ENCODE measurements at regions of chr3 and their contacts with region 1.

Region 1: DNA sequence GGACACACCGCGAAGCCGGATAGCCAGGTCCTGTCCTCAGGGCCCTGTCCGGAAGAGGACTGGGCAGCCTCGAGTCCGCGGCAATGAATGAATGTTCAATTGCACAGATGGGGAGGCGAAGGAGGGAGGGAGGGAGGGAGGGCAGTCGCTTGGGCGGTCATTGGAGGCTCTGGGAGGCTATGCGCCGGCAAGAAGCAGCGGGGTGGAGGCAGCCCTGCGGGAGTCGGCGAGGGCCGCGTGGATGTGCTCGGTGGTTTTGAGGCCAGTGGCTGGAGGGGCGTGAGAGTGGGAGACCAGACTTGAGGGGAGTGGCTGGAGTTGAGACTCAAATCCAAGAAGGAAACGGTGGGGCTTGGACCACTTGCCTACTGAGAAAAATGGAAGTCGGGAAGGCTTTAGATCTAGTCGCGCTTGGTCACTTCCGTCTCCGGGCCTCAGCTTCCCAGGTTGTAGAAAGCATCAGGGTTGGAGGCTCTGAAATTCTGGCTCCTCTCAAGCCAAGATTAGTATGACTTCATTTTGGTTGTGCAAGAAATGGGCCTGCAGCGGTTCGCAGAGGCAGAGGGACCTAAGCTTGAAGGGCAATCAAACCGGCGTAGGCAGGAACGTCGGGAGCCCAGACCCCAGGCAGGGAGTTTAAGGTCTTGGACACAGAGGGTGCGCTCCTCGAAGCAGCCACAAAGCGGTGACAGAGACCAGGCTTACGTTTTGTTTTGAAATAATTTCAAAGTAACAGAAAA is 21.1 kb upstream of the PLXND1 start:
- DNase-seq: peak; percentile 22
- H3K4me3 Mint-ChIP-seq: peak overlapping the region; percentile 82
- H3K27ac Mint-ChIP-seq: peak overlapping the region; percentile 76
- H3K4me1 Mint-ChIP-seq: peaks cover 20% of the 10 kb centered on the region
- H3K27me3 Mint-ChIP-seq: peaks cover 16% of the 10 kb centered on the region

Region 2: DNA sequence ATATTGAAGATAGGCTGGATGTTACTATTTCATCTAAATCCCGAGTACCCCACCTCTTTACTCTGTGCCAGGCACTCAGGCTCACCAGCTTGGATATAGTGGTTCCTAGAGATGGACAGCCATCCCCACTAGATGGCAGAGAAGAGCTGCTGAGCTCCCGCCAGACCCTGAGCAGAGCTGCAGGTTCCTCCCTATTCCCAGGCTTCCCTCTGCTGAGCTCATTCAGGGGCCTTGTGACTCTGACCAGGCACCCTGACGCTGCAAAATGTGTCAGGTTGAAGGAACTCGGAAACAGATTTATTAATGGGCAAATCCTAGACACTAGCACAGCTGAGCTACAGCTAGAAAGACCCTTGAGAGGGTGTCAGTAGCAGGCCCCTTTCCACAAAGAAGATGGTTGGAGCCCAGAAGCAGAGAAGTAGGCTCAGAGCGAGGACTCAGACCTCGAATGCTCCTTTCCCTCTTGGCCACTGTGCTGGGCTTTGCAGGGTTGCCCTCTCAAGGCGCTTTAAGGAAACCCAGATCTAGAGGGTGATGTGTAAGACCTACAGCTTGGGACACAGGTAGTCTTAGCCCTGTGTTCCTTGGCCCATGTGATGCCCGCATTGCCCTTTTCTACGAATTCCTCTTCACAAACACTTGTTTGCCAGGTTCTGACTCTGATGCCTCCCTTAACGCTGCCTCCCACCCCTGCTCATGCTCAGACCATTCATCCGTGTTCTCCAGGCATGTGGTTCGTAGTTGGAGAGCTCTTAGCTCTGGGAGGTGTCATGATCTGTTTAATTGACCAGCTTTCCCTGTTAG is 137.2 kb before region 1 on chr3:
- intact Hi-C with region 1: loop called (anchors 1 kb)
- DNase-seq: peak; percentile 19
- H3K4me3 Mint-ChIP-seq: no peak overlapping the region
- H3K27ac Mint-ChIP-seq: no peak overlapping the region
- H3K4me1 Mint-ChIP-seq: no peaks in the 10 kb centered on the region
- H3K27me3 Mint-ChIP-seq: no peaks in the 10 kb centered on the region

Region 3: DNA sequence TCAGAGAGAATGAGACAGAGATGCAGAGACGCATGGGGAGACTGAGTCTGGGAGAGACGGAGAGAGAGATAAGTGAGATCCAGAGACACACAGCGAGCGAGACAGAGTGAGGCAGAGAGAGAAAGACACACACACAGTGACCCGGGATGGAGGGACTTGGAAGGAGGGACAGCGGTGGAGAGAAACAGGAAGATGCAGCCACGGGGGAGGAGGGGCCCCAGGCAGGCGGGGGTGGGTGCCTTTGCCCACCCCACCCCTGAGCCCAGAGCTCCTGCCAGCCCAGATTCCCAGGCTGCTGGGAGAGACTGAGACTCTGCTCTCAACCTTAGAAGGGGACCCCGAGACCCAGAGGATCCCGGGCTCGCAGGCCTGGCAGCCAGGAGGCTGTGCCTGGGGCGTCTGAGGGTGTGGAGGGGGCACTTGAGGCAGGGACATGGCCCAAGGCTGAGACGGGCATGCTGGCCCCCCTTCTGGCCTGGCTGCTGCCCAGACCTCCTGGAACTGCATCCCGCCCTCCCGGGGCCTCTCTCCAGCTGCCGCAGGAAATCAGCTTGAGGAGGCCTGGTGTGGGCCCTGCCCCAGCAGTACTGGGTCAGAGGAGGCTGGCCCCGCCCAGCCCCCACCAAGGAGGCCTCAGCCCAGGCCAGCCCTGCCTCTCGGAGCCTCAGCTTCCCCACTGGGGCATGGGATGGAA is 66.6 kb before region 1 on chr3:
- intact Hi-C with region 1: no loop called
- DNase-seq: no peak
- H3K4me3 Mint-ChIP-seq: no peak overlapping the region
- H3K27ac Mint-ChIP-seq: no peak overlapping the region
- H3K4me1 Mint-ChIP-seq: no peaks in the 10 kb centered on the region
- H3K27me3 Mint-ChIP-seq: peaks cover 4% of the 10 kb centered on the region

Region 4: DNA sequence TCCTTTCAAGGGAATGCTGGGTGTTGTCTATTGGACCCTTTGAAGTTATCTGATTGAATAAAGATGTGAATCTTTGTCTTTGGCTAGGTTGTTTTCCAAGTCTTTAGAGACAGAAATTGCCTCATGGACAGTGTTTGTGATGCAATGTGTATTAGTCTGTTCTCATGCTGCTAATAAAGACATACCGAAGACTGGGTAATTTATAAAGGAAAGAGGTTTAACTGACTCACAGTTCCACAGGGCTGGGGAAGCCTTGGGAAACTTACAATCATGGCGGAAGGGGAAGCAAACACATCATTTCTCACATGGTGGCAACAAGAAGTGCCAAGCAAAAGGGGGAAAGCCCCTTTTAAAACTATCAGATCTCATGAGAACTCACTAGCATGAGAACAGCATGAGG is 67.6 kb after region 1 on chr3:
- intact Hi-C with region 1: no loop called
- DNase-seq: no peak
- H3K4me3 Mint-ChIP-seq: no peak overlapping the region
- H3K27ac Mint-ChIP-seq: no peak overlapping the region
- H3K4me1 Mint-ChIP-seq: peaks cover 4% of the 10 kb centered on the region
- H3K27me3 Mint-ChIP-seq: no peaks in the 10 kb centered on the region

Region 5: DNA sequence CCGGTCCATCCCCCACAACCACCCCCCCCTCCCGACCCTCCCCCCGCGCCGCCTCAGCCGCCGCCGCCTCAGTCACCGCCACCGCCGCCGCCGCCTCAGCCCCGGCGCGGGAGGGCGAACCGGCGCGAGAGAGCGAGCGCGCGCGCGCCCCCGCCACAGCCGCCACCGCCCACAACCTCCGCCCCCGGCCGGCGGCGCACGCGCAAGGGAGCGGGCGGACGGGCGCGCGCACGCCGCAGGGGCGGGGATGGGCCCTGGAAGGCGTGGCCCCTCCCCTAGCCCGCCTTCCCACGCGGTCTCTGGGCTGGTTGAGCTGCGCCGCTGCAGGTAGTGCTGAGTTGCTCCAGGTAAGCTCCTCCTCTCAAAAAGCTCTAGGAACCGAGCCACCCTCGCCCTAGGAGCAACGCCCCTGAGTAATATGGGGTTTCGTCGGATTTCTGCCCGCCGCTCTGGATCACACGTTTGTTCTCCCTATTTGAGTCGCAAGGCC is 266.0 kb after region 1 on chr3 and contains the start of gene TMCC1:
- intact Hi-C with region 1: loop called (anchors 1 kb)
- DNase-seq: peak; percentile 83
- H3K4me3 Mint-ChIP-seq: peak within 1 kb of the TSS; percentile 91
- H3K27ac Mint-ChIP-seq: peak within 1 kb of the TSS; percentile 89
- H3K4me1 Mint-ChIP-seq: peaks cover 47% of the 10 kb centered on the region
- H3K27me3 Mint-ChIP-seq: no peaks in the 10 kb centered on the region
- total RNA-seq, gene TMCC1: 17.1 and 22.4 TPM in 2 replicates

Region 6: GRCh38 chr3:129994883-129995559 is 367.4 kb after region 1 on chr3:
- intact Hi-C with region 1: loop called (anchors 5 kb)
- DNase-seq: no peak
- H3K4me3 Mint-ChIP-seq: no peak overlapping the region
- H3K27ac Mint-ChIP-seq: no peak overlapping the region
- H3K4me1 Mint-ChIP-seq: no peaks in the 10 kb centered on the region
- H3K27me3 Mint-ChIP-seq: peaks cover 19% of the 10 kb centered on the region

Region 7: DNA sequence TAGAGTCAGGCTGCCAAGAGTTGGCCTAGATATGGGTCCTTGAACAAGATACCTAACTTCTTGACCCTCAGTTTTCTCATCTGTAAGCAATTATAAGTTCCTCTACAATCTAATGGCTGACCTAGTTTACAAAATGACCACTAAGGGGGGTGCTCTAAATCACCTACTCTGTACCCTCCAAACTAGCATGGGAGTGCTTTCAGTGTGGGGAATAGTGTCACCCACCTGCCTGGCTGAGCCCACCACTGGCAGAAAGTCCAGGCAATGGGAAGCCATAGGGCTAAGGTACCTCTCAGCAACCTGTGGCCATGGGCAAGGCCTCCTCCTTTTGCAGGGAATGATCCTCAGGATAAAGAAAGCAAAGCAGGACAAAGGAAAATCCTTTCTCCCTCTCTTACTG is 776.8 kb after region 1 on chr3:
- intact Hi-C with region 1: no loop called
- DNase-seq: no peak
- H3K4me3 Mint-ChIP-seq: no peak overlapping the region
- H3K27ac Mint-ChIP-seq: no peak overlapping the region
- H3K4me1 Mint-ChIP-seq: no peaks in the 10 kb centered on the region
- H3K27me3 Mint-ChIP-seq: peaks cover 5% of the 10 kb centered on the region

Measured in activated T-helper 1 cell treated with anti-CD3 and anti-CD28 coated beads, Interleukin-12 subunit alpha, Interleukin-12 subunit beta, Interleukin-2, Interleukin-4 antibody, amounts not matched to agents 30 ng/mL and 10 ng/mL and 1 ng/mL, durations not matched to agents 14 hours and 24 hours and 36 hours (primary cell).